ENCODE measurements at regions of chr11 and their contacts with region 1.

Region 1: DNA sequence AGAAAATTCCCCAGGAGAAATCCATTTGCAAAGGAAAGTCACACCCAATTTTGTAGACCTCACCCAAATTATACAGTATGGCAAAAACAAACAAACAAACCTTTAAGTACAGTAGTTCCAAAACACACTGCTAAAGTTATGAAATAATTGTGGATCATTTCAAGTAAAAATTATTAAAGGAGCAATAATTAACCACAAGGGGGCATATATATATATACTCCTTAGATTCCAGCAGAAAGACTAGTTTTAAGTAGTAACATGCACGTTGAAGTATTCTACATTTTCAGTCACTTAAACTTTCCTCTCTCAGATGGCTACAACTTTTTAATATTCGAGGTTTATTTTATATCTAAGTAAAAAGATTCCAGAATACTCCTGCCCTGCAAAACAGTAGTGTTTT is 26.8 kb downstream of the RNF141 start:
- DNase-seq: no peak
- H3K4me3 ChIP-seq: no peak overlapping the region
- H3K27ac ChIP-seq: no peak overlapping the region
- H3K4me1 ChIP-seq: no peaks in the 10 kb centered on the region
- H3K27me3 ChIP-seq: no peaks in the 10 kb centered on the region
- CTCF ChIP-seq: peak; percentile 16

Region 2: GRCh38 chr11:10405855-10406592 is 108.2 kb before region 1 on chr11:
- intact Hi-C with region 1: loop called (anchors 10 kb)
- DNase-seq: peak; percentile 58
- H3K4me3 ChIP-seq: no peak overlapping the region
- H3K27ac ChIP-seq: no peak overlapping the region
- H3K4me1 ChIP-seq: no peaks in the 10 kb centered on the region
- H3K27me3 ChIP-seq: no peaks in the 10 kb centered on the region
- CTCF ChIP-seq: peak; percentile 60

Region 3: GRCh38 chr11:10455637-10456487 is 58.3 kb before region 1 on chr11:
- intact Hi-C with region 1: loop called (anchors 2 kb)
- DNase-seq: peak; percentile 80
- H3K4me3 ChIP-seq: peak overlapping the region; percentile 21
- H3K27ac ChIP-seq: peak overlapping the region; percentile 27
- H3K4me1 ChIP-seq: peaks cover 4% of the 10 kb centered on the region
- H3K27me3 ChIP-seq: no peaks in the 10 kb centered on the region
- CTCF ChIP-seq: no peak

Region 4: GRCh38 chr11:10564696-10565318 is 50.6 kb after region 1 on chr11:
- intact Hi-C with region 1: no loop called
- DNase-seq: no peak
- H3K4me3 ChIP-seq: no peak overlapping the region
- H3K27ac ChIP-seq: no peak overlapping the region
- H3K4me1 ChIP-seq: no peaks in the 10 kb centered on the region
- H3K27me3 ChIP-seq: no peaks in the 10 kb centered on the region
- CTCF ChIP-seq: no peak

Region 5: GRCh38 chr11:10653926-10654810 is 140.0 kb after region 1 on chr11:
- intact Hi-C with region 1: loop called (anchors 10 kb)
- DNase-seq: no peak
- H3K4me3 ChIP-seq: no peak overlapping the region
- H3K27ac ChIP-seq: no peak overlapping the region
- H3K4me1 ChIP-seq: no peaks in the 10 kb centered on the region
- H3K27me3 ChIP-seq: no peaks in the 10 kb centered on the region
- CTCF ChIP-seq: peak; percentile 58

Region 6: DNA sequence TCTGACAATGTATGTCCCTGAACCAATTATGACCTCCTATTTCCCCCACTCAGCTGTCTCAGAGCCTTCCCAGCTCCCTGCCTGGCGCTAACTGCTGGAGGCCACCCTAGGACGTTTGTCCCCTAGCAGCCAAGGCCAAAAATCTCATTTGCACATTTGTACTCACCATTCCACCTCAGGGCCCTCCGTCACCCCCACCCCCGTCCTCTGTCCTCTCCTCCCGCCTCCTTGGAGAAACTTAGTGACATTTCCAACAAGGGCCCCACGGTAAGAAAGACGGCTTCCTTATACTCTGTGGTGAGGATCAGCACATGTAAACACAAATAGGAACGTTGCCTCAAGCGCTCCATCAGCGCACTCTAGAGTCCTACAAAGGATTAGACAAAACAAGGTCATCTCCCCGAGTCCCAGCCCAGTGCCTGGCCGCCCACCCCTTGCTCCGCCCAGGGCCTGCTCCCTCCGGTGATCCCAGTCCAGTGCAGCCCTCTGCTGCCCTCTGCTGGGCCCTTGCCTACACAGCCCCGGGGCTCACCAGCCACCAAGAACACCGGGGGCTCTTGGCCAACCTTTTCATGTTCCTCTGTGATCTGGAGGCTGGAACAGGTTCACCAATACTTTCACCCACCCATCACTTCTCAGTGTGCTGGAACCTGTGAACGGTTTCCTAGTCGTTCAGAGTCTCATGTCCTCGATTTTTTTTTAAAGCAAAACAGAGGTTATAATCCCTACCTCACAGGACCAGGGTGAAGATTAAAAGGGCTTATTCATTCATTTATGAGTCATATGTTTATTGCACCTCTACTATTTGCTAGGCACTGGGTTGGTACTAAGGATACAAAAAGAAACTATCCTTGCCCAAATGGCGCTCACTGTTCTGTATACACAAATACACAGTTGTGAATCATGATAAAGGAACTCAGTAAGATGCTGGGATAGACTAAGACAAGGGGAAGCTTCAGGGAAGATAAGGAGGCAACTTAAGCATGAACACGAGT is 221.6 kb after region 1 on chr11:
- intact Hi-C with region 1: loop called (anchors 10 kb)
- DNase-seq: peak; percentile 92
- H3K4me3 ChIP-seq: no peak overlapping the region
- H3K27ac ChIP-seq: no peak overlapping the region
- H3K4me1 ChIP-seq: no peaks in the 10 kb centered on the region
- H3K27me3 ChIP-seq: no peaks in the 10 kb centered on the region
- CTCF ChIP-seq: peak; percentile 99

Measured in colonic mucosa (tissue), 4 donors.